PC-9 (cell line): ENCODE measurements at regions of chr20 and their contacts with region 1.

Region 1: GRCh38 chr20:48945851-48946514 is 24.5 kb downstream of the ARFGEF2 start:
- DNase-seq: peak; percentile 95 to 99
- H3K4me3 ChIP-seq: peak overlapping the region; percentile 49; the same call in 1 of the 2 replicates
- H3K27ac ChIP-seq: peak overlapping the region; percentile 86
- H3K4me1 ChIP-seq: peaks cover 36% of the 10 kb centered on the region
- H3K27me3 ChIP-seq: no peaks in the 10 kb centered on the region
- CTCF ChIP-seq: no peak

Region 2: GRCh38 chr20:47663333-47664067 is 1282.5 kb before region 1 on chr20:
- CTCF ChIA-PET with region 1: no interaction called
- POLR2A ChIA-PET with region 1: no interaction called
- intact Hi-C with region 1: loop called (anchors 5 kb)
- DNase-seq: peak; percentile 73 to 87
- H3K4me3 ChIP-seq: no peak overlapping the region
- H3K27ac ChIP-seq: 0 out of 2 replicates have a peak overlapping the region, but pooled peaks have one; percentile 6
- H3K4me1 ChIP-seq: no peaks in the 10 kb centered on the region
- H3K27me3 ChIP-seq: no peaks in the 10 kb centered on the region
- CTCF ChIP-seq: peak; percentile 98

Region 3: GRCh38 chr20:48635433-48636310 is 310.3 kb before region 1 on chr20:
- CTCF ChIA-PET with region 1: no interaction called
- POLR2A ChIA-PET with region 1: interaction called, 10 read pairs
- intact Hi-C with region 1: no loop called
- DNase-seq: peak; percentile 50 to 77
- H3K4me3 ChIP-seq: no peak overlapping the region
- H3K27ac ChIP-seq: no peak overlapping the region
- H3K4me1 ChIP-seq: peaks cover 15% of the 10 kb centered on the region
- H3K27me3 ChIP-seq: no peaks in the 10 kb centered on the region
- CTCF ChIP-seq: peak; percentile 98

Region 4: GRCh38 chr20:48921151-48921898 is 24.7 kb before region 1 on chr20 and contains the start of gene ARFGEF2:
- CTCF ChIA-PET with region 1: no interaction called
- POLR2A ChIA-PET with region 1: interaction called, 7 read pairs
- intact Hi-C with region 1: loop called (anchors 1 kb)
- DNase-seq: peak; percentile 82 to 97
- H3K4me3 ChIP-seq: peak within 1 kb of the TSS; percentile 65
- H3K27ac ChIP-seq: peak within 1 kb of the TSS; percentile 90
- H3K4me1 ChIP-seq: peaks cover 36% of the 10 kb centered on the region
- H3K27me3 ChIP-seq: no peaks in the 10 kb centered on the region
- CTCF ChIP-seq: peak; percentile 7; the same call in 1 of the 2 replicates
- total RNA-seq, gene ARFGEF2: 39.9 and 47.0 TPM in 2 replicates

Region 5: GRCh38 chr20:48986899-48987298 is 40.9 kb after region 1 on chr20:
- CTCF ChIA-PET with region 1: no interaction called
- POLR2A ChIA-PET with region 1: interaction called, 6 read pairs
- intact Hi-C with region 1: loop called (anchors 1 kb)
- DNase-seq: no peak
- H3K4me3 ChIP-seq: no peak overlapping the region
- H3K27ac ChIP-seq: no peak overlapping the region
- H3K4me1 ChIP-seq: peaks cover 18% of the 10 kb centered on the region
- H3K27me3 ChIP-seq: no peaks in the 10 kb centered on the region
- CTCF ChIP-seq: peak; percentile 65

Region 6: GRCh38 chr20:49245921-49246740 is 300.1 kb after region 1 on chr20:
- CTCF ChIA-PET with region 1: no interaction called
- POLR2A ChIA-PET with region 1: interaction called, 10 read pairs
- intact Hi-C with region 1: no loop called
- DNase-seq: peak; percentile 39 to 52
- H3K4me3 ChIP-seq: no peak overlapping the region
- H3K27ac ChIP-seq: no peak overlapping the region
- H3K4me1 ChIP-seq: no peaks in the 10 kb centered on the region
- H3K27me3 ChIP-seq: no peaks in the 10 kb centered on the region
- CTCF ChIP-seq: peak; percentile 82